ENCODE measurements at regions of chr10 and their contacts with region 1.

Region 1: GRCh38 chr10:97025613-97026242 is 160.0 kb downstream of the SLIT1 start:
- DNase-seq: peak; percentile 48
- H3K4me3 Mint-ChIP-seq: no peak overlapping the region
- H3K27ac Mint-ChIP-seq: no peak overlapping the region
- H3K4me1 Mint-ChIP-seq: peaks cover 6% of the 10 kb centered on the region
- H3K27me3 Mint-ChIP-seq: peaks cover 10% of the 10 kb centered on the region

Region 2: DNA sequence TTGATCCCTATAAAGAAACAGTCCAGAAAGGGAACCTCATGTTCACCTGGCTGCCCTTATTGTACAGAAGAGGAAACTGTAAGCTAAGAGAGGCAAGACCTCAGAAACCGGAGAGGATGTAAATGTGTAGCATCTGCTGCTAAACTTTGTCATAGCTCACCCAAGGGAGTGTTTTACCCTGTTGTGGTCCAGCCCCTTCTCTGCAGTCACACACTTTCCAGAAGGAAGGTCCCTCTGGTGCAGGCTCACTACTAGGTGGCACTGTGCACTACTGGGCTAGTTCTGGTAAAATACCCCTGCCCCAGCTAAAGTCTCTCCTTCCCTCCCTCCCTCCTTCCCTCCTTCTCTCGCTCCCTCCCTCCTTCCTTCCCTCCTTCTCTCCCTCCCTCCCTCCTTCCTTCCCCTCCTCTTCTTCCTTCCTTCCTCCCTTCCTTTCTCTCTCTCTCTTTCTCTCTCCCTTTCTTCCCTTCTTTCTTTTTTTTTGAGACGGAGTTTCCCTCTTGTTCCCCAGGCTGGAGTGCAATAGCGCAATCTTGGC is 236.1 kb before region 1 on chr10:
- intact Hi-C with region 1: loop called (anchors 1 kb)
- DNase-seq: peak; percentile 31
- H3K4me3 Mint-ChIP-seq: no peak overlapping the region
- H3K27ac Mint-ChIP-seq: no peak overlapping the region
- H3K4me1 Mint-ChIP-seq: no peaks in the 10 kb centered on the region
- H3K27me3 Mint-ChIP-seq: peaks cover 18% of the 10 kb centered on the region

Region 3: DNA sequence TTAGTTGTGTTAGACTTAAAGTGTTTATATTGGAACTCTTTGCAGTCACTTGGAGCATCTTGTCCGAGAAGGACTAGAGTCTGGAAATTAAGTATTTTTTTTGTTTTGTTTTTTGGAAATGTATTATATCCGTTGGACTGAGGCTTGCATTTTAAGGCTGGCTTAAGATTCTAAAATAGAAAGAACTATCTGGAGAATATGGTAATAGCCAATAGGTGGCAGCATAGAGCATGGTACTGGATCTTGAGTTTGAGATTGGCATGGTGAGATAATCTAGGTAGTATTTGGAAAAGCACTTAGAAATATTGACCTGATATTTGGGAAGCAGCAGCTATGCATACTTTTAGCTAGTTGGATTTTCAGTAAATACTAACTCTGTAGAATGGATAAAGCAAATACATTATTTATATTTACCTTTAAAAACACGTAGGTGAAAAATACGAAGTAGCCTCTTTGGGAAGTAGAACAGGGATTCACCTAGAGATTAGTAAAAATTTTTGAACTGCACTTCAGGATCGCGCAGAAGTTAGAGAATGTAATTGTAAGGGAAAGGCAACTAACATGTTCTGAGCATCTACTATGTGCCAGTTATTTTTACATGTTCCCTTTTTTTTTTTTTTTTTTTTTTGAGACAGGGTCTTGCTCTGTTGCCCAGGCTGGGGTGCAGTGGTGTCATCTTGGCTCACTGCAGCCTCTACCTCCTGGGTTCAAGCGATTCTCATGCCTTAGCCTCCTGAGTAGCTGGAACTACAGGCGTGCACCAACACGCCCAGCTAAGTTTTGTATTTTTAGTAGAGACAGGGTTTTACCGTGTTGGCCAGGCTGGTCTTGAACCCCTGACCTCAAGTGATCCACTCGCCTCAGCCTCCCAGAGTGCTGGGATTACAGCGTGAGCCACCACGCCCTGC is 115.0 kb before region 1 on chr10:
- intact Hi-C with region 1: loop called (anchors 1 kb)
- DNase-seq: no peak
- H3K4me3 Mint-ChIP-seq: no peak overlapping the region
- H3K27ac Mint-ChIP-seq: peak overlapping the region; percentile 29
- H3K4me1 Mint-ChIP-seq: peaks cover 17% of the 10 kb centered on the region
- H3K27me3 Mint-ChIP-seq: no peaks in the 10 kb centered on the region

Region 4: GRCh38 chr10:97010695-97011206 is 15.0 kb before region 1 on chr10:
- intact Hi-C with region 1: no loop called
- DNase-seq: no peak
- H3K4me3 Mint-ChIP-seq: no peak overlapping the region
- H3K27ac Mint-ChIP-seq: no peak overlapping the region
- H3K4me1 Mint-ChIP-seq: peaks cover 7% of the 10 kb centered on the region
- H3K27me3 Mint-ChIP-seq: no peaks in the 10 kb centered on the region

Measured in activated T-helper 2 cell treated with anti-CD3 and anti-CD28 coated beads, Interferon-gamma antibody, Interleukin-2, Interleukin-4, amounts not matched to agents 10 μg/mL and 5 μg/mL and 100 μg/mL, durations not matched to agents 14 hours and 24 hours and 36 hours (primary cell).